Colonic mucosa (tissue), 4 donors: ENCODE measurements at regions of chr6 and their contacts with region 1.

Region 1: DNA sequence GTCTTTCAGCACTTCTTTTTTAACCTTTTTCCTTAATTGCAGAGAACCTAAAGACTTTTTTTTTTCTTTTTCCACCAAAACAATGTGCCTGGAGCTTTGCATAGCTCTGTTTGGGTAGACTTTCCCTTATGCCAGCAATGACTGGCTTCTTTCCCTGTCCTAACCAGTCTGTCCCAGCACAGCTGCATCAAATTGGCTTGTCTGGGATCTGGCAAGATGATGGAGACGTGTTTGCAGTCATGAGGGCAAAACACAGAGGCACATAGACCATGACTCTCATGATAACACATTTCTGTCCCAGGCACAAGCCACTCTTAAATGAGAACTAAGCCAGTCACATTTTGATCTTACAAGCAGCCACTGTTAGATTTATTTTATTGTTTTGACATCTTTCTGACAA is 16.5 kb downstream of the HEY2 start:
- DNase-seq: no peak
- H3K4me3 ChIP-seq: no peak overlapping the region
- H3K27ac ChIP-seq: no peak overlapping the region
- H3K4me1 ChIP-seq: no peaks in the 10 kb centered on the region
- H3K27me3 ChIP-seq: no peaks in the 10 kb centered on the region
- CTCF ChIP-seq: no peak

Region 2: DNA sequence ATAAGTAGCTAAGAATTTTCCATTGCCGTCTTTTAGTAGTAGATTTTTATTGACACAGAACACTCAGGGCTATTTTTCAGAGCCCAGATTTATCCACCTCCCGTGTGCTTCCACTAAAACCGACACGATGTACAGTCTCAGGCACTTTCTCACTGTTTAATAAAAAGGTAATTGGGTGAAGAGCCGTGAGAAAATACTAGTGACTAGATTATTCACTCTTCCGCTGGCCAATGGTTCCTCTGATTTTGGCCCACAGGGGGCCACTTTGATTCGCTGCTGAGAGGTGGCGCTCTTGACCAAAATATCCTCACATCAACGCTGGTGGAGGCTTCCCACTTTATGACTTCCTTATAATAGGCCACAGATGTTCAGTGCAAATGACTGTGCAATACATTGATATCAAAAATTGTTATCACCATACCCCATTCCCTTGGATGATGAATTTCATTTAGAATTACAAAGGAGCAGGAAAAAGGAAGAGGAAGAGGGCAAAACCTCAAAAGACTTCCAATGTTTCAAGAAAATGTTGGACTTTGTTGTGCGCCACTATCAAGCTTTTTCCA is 451.8 kb before region 1 on chr6:
- intact Hi-C with region 1: loop called (anchors 2 kb)
- DNase-seq: peak; percentile 65
- H3K4me3 ChIP-seq: no peak overlapping the region
- H3K27ac ChIP-seq: no peak overlapping the region
- H3K4me1 ChIP-seq: no peaks in the 10 kb centered on the region
- H3K27me3 ChIP-seq: no peaks in the 10 kb centered on the region
- CTCF ChIP-seq: peak; percentile 69